GM12878 (cell line): ENCODE measurements at regions of chr1 and their contacts with region 1.

Region 1: DNA sequence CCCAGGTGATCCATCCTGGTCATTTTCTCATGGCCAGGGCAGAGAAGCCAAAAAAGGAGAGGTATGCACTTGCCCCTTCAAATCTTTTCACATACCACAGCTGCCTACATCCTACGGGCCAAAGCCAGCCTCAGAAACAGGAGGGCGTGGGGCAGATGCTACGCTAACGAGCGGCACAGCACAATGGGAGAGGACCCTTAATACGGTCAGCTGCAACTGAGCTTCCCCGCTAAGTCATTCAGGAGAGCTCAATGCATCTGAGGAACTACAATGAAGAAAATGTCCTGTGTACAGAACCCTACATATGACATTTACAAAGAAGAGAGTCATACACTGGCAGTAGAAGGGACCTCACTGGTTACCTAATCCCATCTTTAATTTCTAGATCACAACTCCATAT is 78.2 kb downstream of the PGBD5 start:
- DNase-seq: no peak
- ATAC-seq: no peak
- H3K4me3 ChIP-seq: no peak overlapping the region
- H3K27ac ChIP-seq: no peak overlapping the region
- H3K4me1 ChIP-seq: no peaks in the 10 kb centered on the region
- H3K27me3 ChIP-seq: peaks cover 0 to 8% of the 10 kb centered on the region in 2 experiments; a peak in 3 of 4 replicates
- CTCF ChIP-seq: no peak
- EP300 ChIP-seq: no peak
- POLR2A ChIP-seq: no peak
- RAD21 ChIP-seq: no peak

Region 2: DNA sequence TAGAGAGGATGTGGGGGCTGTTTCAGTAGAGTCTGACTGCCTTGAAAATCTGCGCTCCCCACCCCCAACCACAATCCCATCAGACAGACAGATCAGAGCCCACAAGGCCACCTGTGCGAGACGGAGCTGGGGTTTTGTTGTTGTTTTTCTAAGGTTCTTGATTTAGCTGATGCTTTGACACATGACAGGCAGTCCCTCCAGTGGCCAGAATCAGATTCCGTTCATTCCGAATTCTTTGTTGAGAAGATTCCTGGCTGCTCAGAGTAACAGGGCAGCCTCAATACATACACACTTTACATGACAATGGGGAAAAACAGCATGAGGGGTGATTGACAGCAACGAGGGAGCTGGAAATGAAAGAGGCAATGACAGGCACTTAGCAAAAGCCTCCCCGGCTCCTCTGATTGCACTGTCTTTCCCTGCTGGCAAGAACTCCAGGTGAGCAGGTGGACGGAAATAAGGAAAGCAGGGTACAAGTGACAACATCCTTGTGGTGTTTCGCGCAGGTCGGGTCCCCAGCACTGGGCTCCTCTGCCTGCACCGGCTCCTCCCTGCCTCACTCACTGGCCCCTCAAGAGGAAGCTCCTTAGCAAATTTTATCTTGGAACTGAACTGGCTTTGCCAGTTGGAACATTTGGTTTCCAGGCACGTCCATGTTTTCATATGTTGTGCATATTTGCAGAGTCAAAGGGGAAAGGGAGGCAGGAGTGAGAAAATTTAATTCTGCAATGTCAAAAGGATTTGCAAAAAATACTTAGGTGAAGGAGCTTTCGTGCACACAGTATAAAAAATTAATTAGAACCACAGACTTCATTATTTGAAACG is 70.5 kb before region 1 on chr1:
- CTCF ChIA-PET with region 1: no interaction called
- POLR2A ChIA-PET with region 1: no interaction called
- RAD21 ChIA-PET with region 1: no interaction called
- SMC1A ChIA-PET with region 1: no interaction called
- in situ Hi-C with region 1: no loop called
- intact Hi-C with region 1: no loop called
- DNase-seq: no peak
- ATAC-seq: no peak
- H3K4me3 ChIP-seq: no peak overlapping the region
- H3K27ac ChIP-seq: no peak overlapping the region
- H3K4me1 ChIP-seq: peaks cover 4% of the 10 kb centered on the region; the same call in 1 of the 2 replicates
- H3K27me3 ChIP-seq: no peaks in the 10 kb centered on the region
- CTCF ChIP-seq: peak in 1 of 3 experiments; percentile 2; a peak in 1 of 6 replicates
- EP300 ChIP-seq: no peak
- POLR2A ChIP-seq: no peak
- RAD21 ChIP-seq: peak; percentile 48

Region 3: GRCh38 chr1:230335861-230336522 is 11.9 kb before region 1 on chr1:
- CTCF ChIA-PET with region 1: no interaction called
- POLR2A ChIA-PET with region 1: interaction called, 15 read pairs
- RAD21 ChIA-PET with region 1: no interaction called
- SMC1A ChIA-PET with region 1: no interaction called
- in situ Hi-C with region 1: no loop called
- intact Hi-C with region 1: no loop called
- DNase-seq: no peak
- ATAC-seq: no peak
- H3K4me3 ChIP-seq: no peak overlapping the region
- H3K27ac ChIP-seq: no peak overlapping the region
- H3K4me1 ChIP-seq: no peaks in the 10 kb centered on the region
- H3K27me3 ChIP-seq: peaks cover 0 to 1% of the 10 kb centered on the region in 2 experiments; a peak in 2 of 4 replicates
- CTCF ChIP-seq: no peak
- EP300 ChIP-seq: no peak
- POLR2A ChIP-seq: no peak
- RAD21 ChIP-seq: no peak

Region 4: GRCh38 chr1:230375780-230376179 is 27.9 kb after region 1 on chr1:
- CTCF ChIA-PET with region 1: no interaction called
- POLR2A ChIA-PET with region 1: no interaction called
- RAD21 ChIA-PET with region 1: no interaction called
- SMC1A ChIA-PET with region 1: no interaction called
- in situ Hi-C with region 1: no loop called
- intact Hi-C with region 1: no loop called
- DNase-seq: no peak
- ATAC-seq: no peak
- H3K4me3 ChIP-seq: no peak overlapping the region
- H3K27ac ChIP-seq: no peak overlapping the region
- H3K4me1 ChIP-seq: no peaks in the 10 kb centered on the region
- H3K27me3 ChIP-seq: peaks cover 1 to 2% of the 10 kb centered on the region in 2 experiments; a peak in 3 of 4 replicates
- CTCF ChIP-seq: no peak
- EP300 ChIP-seq: no peak
- POLR2A ChIP-seq: no peak
- RAD21 ChIP-seq: no peak

Region 5: GRCh38 chr1:230832476-230832875 is 484.6 kb after region 1 on chr1:
- CTCF ChIA-PET with region 1: no interaction called
- POLR2A ChIA-PET with region 1: no interaction called
- RAD21 ChIA-PET with region 1: no interaction called
- SMC1A ChIA-PET with region 1: no interaction called
- in situ Hi-C with region 1: no loop called
- intact Hi-C with region 1: no loop called
- DNase-seq: no peak
- ATAC-seq: no peak
- H3K4me3 ChIP-seq: no peak overlapping the region
- H3K27ac ChIP-seq: no peak overlapping the region
- H3K4me1 ChIP-seq: no peaks in the 10 kb centered on the region
- H3K27me3 ChIP-seq: no peaks in the 10 kb centered on the region; a peak in 1 of 4 replicates
- CTCF ChIP-seq: no peak
- EP300 ChIP-seq: no peak
- POLR2A ChIP-seq: no peak
- RAD21 ChIP-seq: no peak